ENCODE measurements at regions of chr3 and their contacts with region 1.

Region 1: GRCh38 chr3:183385698-183386613 is 42.5 kb downstream of the MCF2L2 start:
- DNase-seq: peak; percentile 47
- H3K4me3 ChIP-seq: no peak overlapping the region; a peak in 1 of 4 replicates
- H3K27ac ChIP-seq: peak overlapping the region in 1 of 2 experiments; percentile 16; a peak in 1 of 4 replicates
- H3K4me1 ChIP-seq: peaks cover 2 to 7% of the 10 kb centered on the region in 2 experiments; a peak in 2 of 4 replicates
- H3K27me3 ChIP-seq: no peaks in the 10 kb centered on the region
- CTCF ChIP-seq: peak; percentile 80
- EP300 ChIP-seq: no peak
- RAD21 ChIP-seq: peak; percentile 88

Region 2: DNA sequence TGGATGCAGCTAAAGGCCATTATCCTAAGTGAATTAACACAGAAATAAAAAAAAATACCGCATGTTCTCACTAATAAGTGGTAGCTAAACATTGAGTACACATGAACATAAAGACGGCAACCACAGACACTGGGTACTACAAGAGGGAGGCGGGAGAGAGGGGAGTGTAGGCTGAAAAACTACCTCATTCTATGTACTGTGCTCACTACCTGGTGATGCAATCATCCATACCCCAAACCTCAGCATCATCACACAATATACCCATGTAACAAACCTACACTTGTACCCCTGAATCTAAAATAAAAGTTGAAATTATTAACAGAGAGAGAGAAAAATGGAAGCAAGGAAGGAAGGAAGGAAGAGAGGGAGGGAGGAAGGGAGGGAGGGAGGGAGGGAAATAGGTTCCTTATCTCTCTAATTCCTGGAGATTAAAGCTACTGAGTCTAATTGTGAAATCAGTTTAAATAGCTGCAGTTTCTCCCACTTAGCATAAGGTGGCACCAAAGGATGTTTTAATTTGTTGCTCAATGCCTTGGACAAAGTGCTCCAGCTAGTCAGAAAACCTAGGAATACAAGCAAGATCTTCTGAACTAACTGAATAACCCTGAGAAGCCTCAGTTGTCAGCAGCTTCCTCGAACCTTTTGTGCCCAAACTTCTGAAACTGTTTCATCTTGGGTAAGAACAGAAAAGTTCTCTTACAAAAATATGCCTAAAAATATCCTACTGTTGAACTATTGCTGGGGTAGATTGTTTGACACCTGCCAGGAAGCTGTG is 672.0 kb before region 1 on chr3:
- CTCF ChIA-PET with region 1: interaction called, 10 read pairs
- POLR2A ChIA-PET with region 1: no interaction called
- DNase-seq: peak; percentile 62
- H3K4me3 ChIP-seq: no peak overlapping the region
- H3K27ac ChIP-seq: no peak overlapping the region
- H3K4me1 ChIP-seq: no peaks in the 10 kb centered on the region; a peak in 1 of 4 replicates
- H3K27me3 ChIP-seq: no peaks in the 10 kb centered on the region
- CTCF ChIP-seq: peak; percentile 69
- EP300 ChIP-seq: no peak
- RAD21 ChIP-seq: peak; percentile 93

Region 3: DNA sequence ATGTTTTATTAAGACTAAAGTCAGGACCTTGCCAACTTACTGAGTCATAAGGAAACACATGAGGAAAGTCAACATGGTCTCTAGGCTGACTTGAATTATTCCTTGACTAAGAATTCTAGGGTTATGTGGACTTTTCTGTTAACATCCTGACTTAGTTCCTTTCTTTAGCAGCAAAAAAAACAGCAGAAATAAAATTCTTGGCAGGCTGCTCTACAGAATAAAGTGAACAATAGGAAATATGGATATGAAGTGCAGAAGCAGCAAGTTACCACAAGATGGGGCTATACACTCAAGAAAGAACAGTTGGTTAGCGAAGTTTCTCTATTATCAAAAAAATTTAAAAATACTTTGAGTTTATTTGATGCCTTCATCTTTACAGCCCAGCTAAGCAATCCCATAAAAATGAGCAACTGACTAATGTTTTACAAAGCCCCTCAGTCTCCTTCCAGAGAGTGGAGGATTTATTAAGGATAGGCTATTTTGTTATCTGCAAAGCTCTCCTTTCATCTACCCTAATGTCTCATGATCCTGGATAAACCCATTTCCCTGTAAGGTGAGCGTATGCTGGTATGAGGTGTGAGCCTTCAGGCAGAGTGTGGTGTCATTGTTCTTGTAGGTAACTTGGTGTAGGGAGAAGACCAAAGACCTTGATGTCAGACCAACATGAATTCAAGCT is 263.6 kb before region 1 on chr3:
- CTCF ChIA-PET with region 1: interaction called, 143 read pairs
- POLR2A ChIA-PET with region 1: no interaction called
- DNase-seq: peak; percentile 63
- H3K4me3 ChIP-seq: no peak overlapping the region; a peak in 1 of 4 replicates
- H3K27ac ChIP-seq: peak overlapping the region in 1 of 2 experiments; percentile 14; a peak in 2 of 4 replicates
- H3K4me1 ChIP-seq: peaks cover 0 to 7% of the 10 kb centered on the region in 2 experiments; a peak in 1 of 4 replicates
- H3K27me3 ChIP-seq: peaks cover 3% of the 10 kb centered on the region; the same call in 1 of the 2 replicates
- CTCF ChIP-seq: peak; percentile 97
- EP300 ChIP-seq: no peak
- RAD21 ChIP-seq: peak; percentile 92

Region 4: DNA sequence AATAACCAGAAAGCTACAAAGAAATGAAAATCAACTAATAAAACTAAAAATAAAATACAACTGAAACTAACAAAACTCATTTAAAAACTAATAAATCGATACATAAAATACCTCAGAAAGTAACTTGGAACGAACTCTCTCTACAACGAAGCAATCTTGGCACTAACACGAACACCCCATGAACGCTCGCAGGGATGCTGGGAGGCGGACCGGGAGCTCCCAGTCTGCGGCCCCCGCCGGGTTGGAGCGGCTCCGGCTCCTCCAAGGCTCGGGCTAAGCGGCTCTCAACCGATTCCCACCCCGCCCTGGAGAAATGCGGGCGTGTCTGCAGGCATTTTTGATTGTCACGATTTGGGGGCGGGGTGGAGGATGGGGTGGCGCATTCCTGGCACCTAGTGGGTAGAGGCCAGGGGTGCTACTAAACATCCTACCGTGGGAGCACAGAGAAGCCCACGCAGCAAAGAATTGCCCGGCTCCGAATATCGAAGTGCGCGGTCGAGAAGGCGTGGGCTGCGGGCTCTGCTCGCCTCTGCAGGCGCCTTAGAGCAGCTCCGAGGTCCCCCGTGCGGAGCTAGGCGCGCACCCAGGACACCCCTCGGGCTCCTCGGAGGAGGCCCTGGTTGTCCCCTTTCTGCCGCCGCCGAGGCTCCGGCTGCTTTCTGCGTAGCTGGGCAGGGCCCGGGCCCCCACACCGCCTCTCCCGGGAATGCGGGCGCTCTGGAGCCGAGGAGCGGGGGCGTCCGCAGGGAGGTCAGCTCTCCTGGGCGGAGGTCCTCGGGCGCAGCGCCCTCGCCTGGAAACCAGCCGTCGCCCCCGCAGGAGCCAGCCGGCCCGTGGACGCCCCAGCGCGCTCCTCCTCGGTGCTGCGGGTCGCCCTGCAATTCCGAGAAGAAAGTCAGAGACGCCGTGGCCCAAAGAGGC is 207.1 kb before region 1 on chr3:
- CTCF ChIA-PET with region 1: interaction called, 361 read pairs
- POLR2A ChIA-PET with region 1: no interaction called
- DNase-seq: peak; percentile 81
- H3K4me3 ChIP-seq: peak overlapping the region; percentile 49 to 66
- H3K27ac ChIP-seq: no peak overlapping the region
- H3K4me1 ChIP-seq: peaks cover 0 to 15% of the 10 kb centered on the region in 2 experiments; a peak in 2 of 4 replicates
- H3K27me3 ChIP-seq: no peaks in the 10 kb centered on the region
- CTCF ChIP-seq: peak; percentile 36; the same call in 1 of the 2 replicates
- EP300 ChIP-seq: no peak
- RAD21 ChIP-seq: no peak; the same call in 1 of the 2 replicates

Region 5: GRCh38 chr3:183252973-183253901 is 132.7 kb before region 1 on chr3 and contains the start of gene B3GNT5:
- CTCF ChIA-PET with region 1: interaction called, 19 read pairs
- POLR2A ChIA-PET with region 1: no interaction called
- DNase-seq: peak; percentile 68
- H3K4me3 ChIP-seq: peak within 1 kb of the TSS; percentile 79 to 88
- H3K27ac ChIP-seq: peak within 1 kb of the TSS; percentile 43 to 77
- H3K4me1 ChIP-seq: peaks cover 0 to 2% of the 10 kb centered on the region in 2 experiments; a peak in 1 of 4 replicates
- H3K27me3 ChIP-seq: no peaks in the 10 kb centered on the region
- CTCF ChIP-seq: no peak
- EP300 ChIP-seq: no peak
- RAD21 ChIP-seq: no peak
- polyA plus RNA-seq, gene B3GNT5: 4.7 and 6.0 TPM in 2 replicates

Region 6: GRCh38 chr3:183400352-183400751 is 14.4 kb after region 1 on chr3:
- CTCF ChIA-PET with region 1: interaction called, 11 read pairs
- POLR2A ChIA-PET with region 1: no interaction called
- DNase-seq: no peak
- H3K4me3 ChIP-seq: no peak overlapping the region
- H3K27ac ChIP-seq: no peak overlapping the region
- H3K4me1 ChIP-seq: no peaks in the 10 kb centered on the region; a peak in 1 of 4 replicates
- H3K27me3 ChIP-seq: no peaks in the 10 kb centered on the region
- CTCF ChIP-seq: no peak
- EP300 ChIP-seq: no peak
- RAD21 ChIP-seq: no peak

Measured in SK-N-SH (cell line).